ENCODE measurements at regions of chr15 and their contacts with region 1.

Region 1: DNA sequence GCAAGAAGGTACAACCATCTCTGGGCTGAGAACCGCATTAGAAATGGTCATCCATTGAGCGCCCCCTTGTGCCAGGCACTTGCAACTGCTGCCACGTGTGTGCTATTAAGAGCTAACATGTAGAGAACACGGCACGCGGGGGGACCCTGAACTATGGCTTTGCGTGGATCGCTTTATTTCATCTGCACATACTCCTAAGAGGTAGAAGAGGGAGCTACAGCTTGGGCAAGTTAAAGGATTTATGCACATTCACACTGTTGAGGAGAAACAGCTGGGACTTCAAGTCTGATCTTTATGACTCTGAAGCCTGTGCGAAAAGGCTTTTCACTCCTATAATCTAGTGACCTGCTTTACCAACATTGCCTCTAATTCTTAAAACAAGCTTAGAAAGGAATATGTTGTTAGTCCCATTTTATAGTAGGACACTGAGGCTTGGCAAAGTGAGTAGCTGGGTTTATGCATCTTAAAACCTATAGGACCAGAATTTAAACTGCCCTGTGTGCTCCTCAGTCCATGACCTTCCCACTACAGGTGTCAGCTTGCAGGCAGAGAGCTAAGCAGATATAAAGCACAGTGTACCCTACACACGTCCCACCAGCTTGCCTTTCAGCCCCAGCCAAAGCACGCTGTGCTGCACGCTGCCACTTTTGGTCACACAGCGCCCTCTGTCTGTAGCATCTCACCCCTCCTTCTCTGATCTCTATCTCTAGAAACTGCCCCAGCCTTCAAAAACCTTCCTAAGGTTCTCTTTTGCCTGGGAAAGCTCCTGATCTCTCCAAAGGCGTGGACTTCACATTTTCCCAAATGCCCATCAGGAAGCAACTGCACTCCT is 57.8 kb downstream of the STARD5 start:
- DNase-seq: peak; percentile 84
- ATAC-seq: peak; percentile 89
- H3K4me3 ChIP-seq: peak overlapping the region in 4 of 5 experiments; percentile 8 to 53 (median 29)
- H3K4me3 Mint-ChIP-seq: peak overlapping the region; percentile 84
- H3K27ac ChIP-seq: no peak overlapping the region
- H3K27ac Mint-ChIP-seq: no peak overlapping the region
- H3K4me1 ChIP-seq: peaks cover 14 to 20% of the 10 kb centered on the region in 2 donors
- H3K4me1 Mint-ChIP-seq: peaks cover 21% of the 10 kb centered on the region
- H3K27me3 ChIP-seq: no peaks in the 10 kb centered on the region
- H3K27me3 Mint-ChIP-seq: no peaks in the 10 kb centered on the region
- CTCF ChIP-seq: peak; percentile 88

Region 2: DNA sequence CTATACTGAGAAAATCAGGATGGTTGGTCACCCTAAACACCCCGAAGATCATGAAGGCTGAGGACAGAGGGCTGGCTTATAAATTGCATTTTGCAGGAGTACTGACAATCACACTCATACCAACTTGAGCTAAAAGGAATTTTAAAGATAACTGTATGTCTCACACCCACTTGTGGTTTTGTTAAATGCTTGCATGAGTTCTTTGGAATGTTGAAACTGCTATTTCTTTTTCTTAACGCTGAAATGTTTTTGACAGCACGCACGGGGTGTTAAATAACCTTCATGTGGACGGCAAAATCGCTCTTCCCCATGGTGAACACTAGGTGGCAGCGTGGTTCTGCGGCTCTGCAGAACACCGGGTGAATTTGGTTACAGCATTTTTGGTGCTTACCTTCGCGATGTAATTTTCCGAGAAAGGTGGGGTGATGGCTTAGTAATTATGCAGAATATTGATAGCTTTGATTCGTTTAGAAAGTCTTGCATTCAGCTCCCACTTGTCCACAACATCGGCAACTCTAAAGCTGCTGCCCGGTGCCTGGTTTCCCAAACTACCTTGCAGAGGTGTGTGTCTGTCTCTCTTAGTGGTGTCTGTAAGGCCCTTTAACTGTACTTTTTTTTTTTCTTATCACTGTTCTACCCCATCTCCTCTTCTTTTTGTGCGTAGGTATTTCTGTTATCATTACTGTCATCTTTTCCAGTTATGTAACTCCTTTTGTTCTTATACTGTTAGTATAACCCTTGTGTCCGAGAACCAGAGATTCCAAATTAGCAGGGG is 810.3 kb before region 1 on chr15:
- CTCF ChIA-PET with region 1: interaction called, 39 read pairs
- POLR2A ChIA-PET with region 1: no interaction called
- intact Hi-C with region 1: no loop called
- DNase-seq: peak; percentile 69
- ATAC-seq: peak; percentile 49
- H3K4me3 ChIP-seq: no peak overlapping the region
- H3K4me3 Mint-ChIP-seq: no peak overlapping the region
- H3K27ac ChIP-seq: no peak overlapping the region
- H3K27ac Mint-ChIP-seq: no peak overlapping the region
- H3K4me1 ChIP-seq: peaks cover 0 to 4% of the 10 kb centered on the region in 2 donors
- H3K4me1 Mint-ChIP-seq: peaks cover 4% of the 10 kb centered on the region
- H3K27me3 ChIP-seq: peaks cover 0 to 8% (median 4%) of the 10 kb centered on the region in 4 experiments
- H3K27me3 Mint-ChIP-seq: peaks cover 11% of the 10 kb centered on the region
- CTCF ChIP-seq: peak; percentile 98

Region 3: GRCh38 chr15:81106560-81106959 is 159.6 kb before region 1 on chr15:
- CTCF ChIA-PET with region 1: interaction called, 164 read pairs
- POLR2A ChIA-PET with region 1: interaction called, 3 read pairs
- intact Hi-C with region 1: loop called (anchors 1 kb)
- DNase-seq: peak; percentile 59
- ATAC-seq: peak; percentile 53
- H3K4me3 ChIP-seq: no peak overlapping the region
- H3K4me3 Mint-ChIP-seq: no peak overlapping the region
- H3K27ac ChIP-seq: no peak overlapping the region
- H3K27ac Mint-ChIP-seq: no peak overlapping the region
- H3K4me1 ChIP-seq: no peaks in the 10 kb centered on the region
- H3K4me1 Mint-ChIP-seq: peaks cover 6% of the 10 kb centered on the region
- H3K27me3 ChIP-seq: peaks cover 0 to 12% (median 4%) of the 10 kb centered on the region in 4 experiments
- H3K27me3 Mint-ChIP-seq: peaks cover 42% of the 10 kb centered on the region
- CTCF ChIP-seq: peak; percentile 79

Region 4: DNA sequence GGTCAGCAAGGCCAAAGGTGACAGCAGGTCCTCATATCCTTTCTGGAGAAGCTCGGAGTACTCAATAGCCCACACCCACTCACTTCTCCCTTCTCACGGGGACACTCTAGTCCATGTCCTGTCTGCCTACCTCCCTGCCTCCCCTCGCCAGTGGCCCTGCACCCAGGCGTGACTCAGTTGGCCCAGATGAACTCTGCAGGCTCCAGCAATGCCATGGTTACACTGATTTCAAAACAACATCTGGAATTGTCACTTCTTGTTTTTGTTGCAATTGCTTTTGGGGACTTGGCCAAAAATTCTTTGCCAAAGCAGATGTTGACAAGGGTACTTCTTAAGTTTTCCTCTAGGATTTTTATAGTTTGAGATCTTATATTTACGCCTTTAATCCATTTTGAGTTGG is 56.5 kb before region 1 on chr15:
- CTCF ChIA-PET with region 1: no interaction called
- POLR2A ChIA-PET with region 1: no interaction called
- intact Hi-C with region 1: no loop called
- DNase-seq: no peak
- ATAC-seq: no peak
- H3K4me3 ChIP-seq: no peak overlapping the region
- H3K4me3 Mint-ChIP-seq: no peak overlapping the region
- H3K27ac ChIP-seq: no peak overlapping the region
- H3K27ac Mint-ChIP-seq: no peak overlapping the region
- H3K4me1 ChIP-seq: no peaks in the 10 kb centered on the region
- H3K4me1 Mint-ChIP-seq: no peaks in the 10 kb centered on the region
- H3K27me3 ChIP-seq: peaks cover 0 to 5% (median 0%) of the 10 kb centered on the region in 4 experiments
- H3K27me3 Mint-ChIP-seq: peaks cover 27% of the 10 kb centered on the region
- CTCF ChIP-seq: no peak

Region 5: GRCh38 chr15:81286621-81287121 is 20.5 kb after region 1 on chr15:
- CTCF ChIA-PET with region 1: interaction called, 146 read pairs
- POLR2A ChIA-PET with region 1: interaction called, 3 read pairs
- intact Hi-C with region 1: no loop called
- DNase-seq: peak; percentile 77
- ATAC-seq: peak; percentile 80
- H3K4me3 ChIP-seq: peak overlapping the region in 3 of 5 experiments; percentile 13 to 28 (median 21)
- H3K4me3 Mint-ChIP-seq: peak overlapping the region; percentile 65
- H3K27ac ChIP-seq: peak overlapping the region; percentile 92 to 98
- H3K27ac Mint-ChIP-seq: peak overlapping the region; percentile 96
- H3K4me1 ChIP-seq: peaks cover 65 to 81% of the 10 kb centered on the region in 2 donors
- H3K4me1 Mint-ChIP-seq: peaks cover 74% of the 10 kb centered on the region
- H3K27me3 ChIP-seq: no peaks in the 10 kb centered on the region
- H3K27me3 Mint-ChIP-seq: no peaks in the 10 kb centered on the region
- CTCF ChIP-seq: no peak

Region 6: GRCh38 chr15:81311752-81312464 is 45.7 kb after region 1 on chr15:
- CTCF ChIA-PET with region 1: interaction called, 13 read pairs
- POLR2A ChIA-PET with region 1: interaction called, 5 read pairs
- intact Hi-C with region 1: no loop called
- DNase-seq: peak; percentile 85
- ATAC-seq: peak; percentile 86
- H3K4me3 ChIP-seq: peak overlapping the region in 3 of 5 experiments; percentile 23 to 27 (median 25)
- H3K4me3 Mint-ChIP-seq: peak overlapping the region; percentile 65
- H3K27ac ChIP-seq: peak overlapping the region; percentile 66 to 88
- H3K27ac Mint-ChIP-seq: peak overlapping the region; percentile 87
- H3K4me1 ChIP-seq: peaks cover 62 to 67% of the 10 kb centered on the region in 2 donors
- H3K4me1 Mint-ChIP-seq: peaks cover 80% of the 10 kb centered on the region
- H3K27me3 ChIP-seq: no peaks in the 10 kb centered on the region
- H3K27me3 Mint-ChIP-seq: no peaks in the 10 kb centered on the region
- CTCF ChIP-seq: no peak

Region 7: DNA sequence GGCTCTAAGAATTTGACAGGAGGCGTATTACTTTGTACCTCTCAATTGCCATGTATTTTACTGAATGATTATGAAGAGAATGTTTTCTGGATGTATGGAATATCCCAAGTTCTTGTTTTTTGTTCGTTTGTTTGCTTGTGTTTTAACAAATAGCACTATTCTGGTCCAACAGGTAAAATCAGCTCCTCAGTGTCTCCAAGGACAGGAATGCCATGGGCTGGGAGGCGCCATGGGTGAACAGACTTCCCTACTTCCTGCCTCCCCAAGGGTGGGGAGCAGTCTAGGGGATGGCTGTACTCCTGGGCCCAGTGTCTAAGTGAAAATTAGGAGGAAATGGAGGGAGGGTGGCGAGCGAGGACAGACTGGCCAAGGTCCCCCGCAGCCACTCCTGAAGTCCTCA is 76.4 kb after region 1 on chr15:
- CTCF ChIA-PET with region 1: interaction called, 119 read pairs
- POLR2A ChIA-PET with region 1: no interaction called
- intact Hi-C with region 1: no loop called
- DNase-seq: no peak
- ATAC-seq: no peak
- H3K4me3 ChIP-seq: no peak overlapping the region
- H3K4me3 Mint-ChIP-seq: no peak overlapping the region
- H3K27ac ChIP-seq: no peak overlapping the region
- H3K27ac Mint-ChIP-seq: no peak overlapping the region
- H3K4me1 ChIP-seq: no peaks in the 10 kb centered on the region
- H3K4me1 Mint-ChIP-seq: no peaks in the 10 kb centered on the region
- H3K27me3 ChIP-seq: no peaks in the 10 kb centered on the region
- H3K27me3 Mint-ChIP-seq: peaks cover 6% of the 10 kb centered on the region
- CTCF ChIP-seq: no peak

Region 8: DNA sequence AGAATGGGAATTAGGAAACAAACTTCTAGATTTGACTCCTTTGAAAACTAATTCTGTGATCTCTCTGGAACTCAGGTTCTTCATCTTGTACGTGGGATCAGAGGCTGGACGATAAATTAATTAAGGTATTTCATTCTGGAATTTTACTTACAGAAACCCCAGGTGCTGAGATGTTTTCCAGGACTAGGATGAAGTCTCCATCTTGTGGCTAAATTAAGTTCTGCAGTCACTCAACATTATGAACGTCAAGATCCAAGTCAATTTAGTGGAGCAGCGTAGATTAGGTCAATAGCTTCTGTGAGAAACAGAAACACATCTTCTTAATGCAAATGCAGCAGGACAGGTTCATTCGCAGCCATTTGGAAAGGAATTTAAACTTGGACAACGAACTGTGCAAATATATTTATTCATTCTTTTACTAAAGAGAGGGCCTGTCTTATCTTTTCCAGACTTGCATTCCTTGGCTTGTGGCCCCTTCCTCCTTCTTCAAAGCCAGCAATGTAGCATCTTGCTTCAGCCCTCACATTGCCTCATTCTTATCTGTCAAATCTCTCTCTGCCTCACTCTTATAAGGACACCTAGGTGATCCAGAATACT is 134.6 kb after region 1 on chr15:
- CTCF ChIA-PET with region 1: interaction called, 125 read pairs
- POLR2A ChIA-PET with region 1: no interaction called
- intact Hi-C with region 1: loop called (anchors 2 kb)
- DNase-seq: peak; percentile 70
- ATAC-seq: no peak
- H3K4me3 ChIP-seq: no peak overlapping the region
- H3K4me3 Mint-ChIP-seq: no peak overlapping the region
- H3K27ac ChIP-seq: no peak overlapping the region
- H3K27ac Mint-ChIP-seq: no peak overlapping the region
- H3K4me1 ChIP-seq: no peaks in the 10 kb centered on the region
- H3K4me1 Mint-ChIP-seq: no peaks in the 10 kb centered on the region
- H3K27me3 ChIP-seq: no peaks in the 10 kb centered on the region
- H3K27me3 Mint-ChIP-seq: peaks cover 10% of the 10 kb centered on the region
- CTCF ChIP-seq: peak; percentile 84

Region 9: GRCh38 chr15:81596159-81596865 is 330.2 kb after region 1 on chr15:
- CTCF ChIA-PET with region 1: no interaction called
- POLR2A ChIA-PET with region 1: no interaction called
- intact Hi-C with region 1: no loop called
- DNase-seq: no peak
- ATAC-seq: no peak
- H3K4me3 ChIP-seq: peak overlapping the region in 1 of 5 experiments; percentile 7
- H3K4me3 Mint-ChIP-seq: peak overlapping the region; percentile 72
- H3K27ac ChIP-seq: peak overlapping the region; percentile 62 to 80
- H3K27ac Mint-ChIP-seq: peak overlapping the region; percentile 74
- H3K4me1 ChIP-seq: peaks cover 0 to 36% of the 10 kb centered on the region in 2 donors
- H3K4me1 Mint-ChIP-seq: peaks cover 27% of the 10 kb centered on the region
- H3K27me3 ChIP-seq: no peaks in the 10 kb centered on the region
- H3K27me3 Mint-ChIP-seq: no peaks in the 10 kb centered on the region
- CTCF ChIP-seq: no peak

Measured in B cell (primary cell).